CD4-positive, alpha-beta memory T cell (primary cell): ENCODE measurements at regions of chr12 and their contacts with region 1.

Region 1: DNA sequence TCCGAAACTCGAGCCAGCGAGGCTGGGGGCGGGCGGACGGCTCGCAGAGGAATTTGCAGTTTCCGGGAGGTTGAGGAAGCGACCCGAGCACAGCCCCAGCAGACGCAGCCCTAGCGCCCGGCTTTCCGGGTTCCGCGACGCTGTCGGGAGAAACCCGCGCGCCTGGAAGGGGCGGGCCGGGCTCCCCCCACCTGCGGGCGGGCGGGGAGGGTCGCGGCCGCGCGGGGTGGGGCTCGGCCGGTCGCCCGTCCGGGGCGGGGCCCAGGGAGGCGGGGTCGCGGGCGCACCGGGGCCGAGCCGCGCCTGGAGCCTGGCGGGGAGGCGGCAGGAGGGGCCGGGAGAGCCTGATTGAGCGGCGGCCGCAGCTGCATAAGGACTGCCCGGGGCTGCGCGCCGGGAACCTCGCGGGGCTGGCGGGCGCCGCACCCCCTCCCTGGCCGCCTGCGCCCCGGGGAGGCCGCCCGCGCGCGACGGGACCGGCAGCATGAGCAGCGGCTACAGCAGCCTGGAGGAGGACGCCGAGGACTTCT is at the start of gene RASSF3:
- DNase-seq: peak; percentile 74 to 79 (median 79)
- H3K4me3 ChIP-seq: peak within 1 kb of the TSS; percentile 91 to 95
- H3K4me3 Mint-ChIP-seq: peak within 1 kb of the TSS; percentile 96 to 99 (median 98)
- H3K27ac ChIP-seq: peak within 1 kb of the TSS; percentile 88
- H3K27ac Mint-ChIP-seq: peak within 1 kb of the TSS; percentile 95 to 98 (median 97)
- H3K4me1 ChIP-seq: peaks cover 41% of the 10 kb centered on the region
- H3K4me1 Mint-ChIP-seq: peaks cover 27 to 65% (median 40%) of the 10 kb centered on the region in 4 donors
- H3K27me3 ChIP-seq: no peaks in the 10 kb centered on the region
- H3K27me3 Mint-ChIP-seq: no peaks in the 10 kb centered on the region
- total RNA-seq, gene RASSF3: 159 TPM

Region 2: GRCh38 chr12:64403707-64404469 is 206.3 kb before region 1 on chr12 and contains the start of gene XPOT:
- CTCF ChIA-PET with region 1: no interaction called
- POLR2A ChIA-PET with region 1: interaction called, 3 read pairs
- intact Hi-C with region 1: loop called (anchors 5 kb)
- DNase-seq: peak; percentile 91 to 95 (median 94)
- H3K4me3 ChIP-seq: peak within 1 kb of the TSS; percentile 78 to 86
- H3K4me3 Mint-ChIP-seq: peak within 1 kb of the TSS; percentile 90 to 98 (median 96)
- H3K27ac ChIP-seq: peak within 1 kb of the TSS; percentile 91
- H3K27ac Mint-ChIP-seq: peak within 1 kb of the TSS; percentile 94 to 98 (median 97)
- H3K4me1 ChIP-seq: peaks cover 33% of the 10 kb centered on the region
- H3K4me1 Mint-ChIP-seq: peaks cover 21 to 49% (median 37%) of the 10 kb centered on the region in 4 donors
- H3K27me3 ChIP-seq: no peaks in the 10 kb centered on the region
- H3K27me3 Mint-ChIP-seq: no peaks in the 10 kb centered on the region
- total RNA-seq, gene XPOT: 88.8 TPM

Region 3: GRCh38 chr12:64551698-64552097 is 58.5 kb before region 1 on chr12:
- CTCF ChIA-PET with region 1: interaction called, 75 read pairs
- POLR2A ChIA-PET with region 1: interaction called, 20 read pairs
- intact Hi-C with region 1: loop called (anchors 1 kb)
- DNase-seq: no peak
- H3K4me3 ChIP-seq: no peak overlapping the region
- H3K4me3 Mint-ChIP-seq: no peak overlapping the region
- H3K27ac ChIP-seq: no peak overlapping the region
- H3K27ac Mint-ChIP-seq: no peak overlapping the region
- H3K4me1 ChIP-seq: peaks cover 8% of the 10 kb centered on the region
- H3K4me1 Mint-ChIP-seq: peaks cover 5 to 9% (median 6%) of the 10 kb centered on the region in 4 donors
- H3K27me3 ChIP-seq: no peaks in the 10 kb centered on the region
- H3K27me3 Mint-ChIP-seq: no peaks in the 10 kb centered on the region

Region 4: DNA sequence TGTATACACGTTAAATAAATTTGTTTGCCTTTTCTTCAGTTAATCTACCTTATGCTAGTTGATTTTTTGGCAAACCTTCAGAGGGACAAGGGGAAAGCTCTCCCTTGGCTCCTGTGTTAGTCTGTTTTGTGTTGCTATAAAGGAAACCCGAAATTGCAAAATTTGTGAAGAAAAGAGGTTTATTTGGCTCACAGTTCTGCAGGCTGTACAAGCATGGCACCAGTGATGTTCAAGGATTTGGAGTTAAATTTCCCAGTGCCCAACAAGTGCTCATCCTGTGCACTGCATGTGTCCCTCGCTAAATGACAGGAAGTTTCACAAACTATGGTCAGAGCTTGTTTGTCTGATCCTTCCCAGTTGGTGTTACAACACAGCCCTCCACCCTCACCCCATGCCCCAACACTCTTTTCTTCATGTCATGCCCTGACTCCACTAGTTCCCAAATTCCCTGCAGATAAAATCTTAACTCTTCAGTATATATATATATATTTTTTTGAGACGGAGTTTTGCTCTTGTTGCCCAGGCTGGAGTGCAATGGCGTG is 13.9 kb before region 1 on chr12:
- CTCF ChIA-PET with region 1: interaction called, 10 read pairs
- POLR2A ChIA-PET with region 1: interaction called, 46 read pairs
- intact Hi-C with region 1: loop called (anchors 1 kb)
- DNase-seq: no peak
- H3K4me3 ChIP-seq: no peak overlapping the region
- H3K4me3 Mint-ChIP-seq: peak overlapping the region in 1 of 8 donors; percentile 55
- H3K27ac ChIP-seq: no peak overlapping the region
- H3K27ac Mint-ChIP-seq: peak overlapping the region in 3 of 7 donors; percentile 5 to 66 (median 23)
- H3K4me1 ChIP-seq: peaks cover 43% of the 10 kb centered on the region
- H3K4me1 Mint-ChIP-seq: peaks cover 30 to 49% (median 38%) of the 10 kb centered on the region in 4 donors
- H3K27me3 ChIP-seq: no peaks in the 10 kb centered on the region
- H3K27me3 Mint-ChIP-seq: no peaks in the 10 kb centered on the region

Region 5: GRCh38 chr12:64660237-64661018 is 50.2 kb after region 1 on chr12:
- CTCF ChIA-PET with region 1: interaction called, 5 read pairs
- POLR2A ChIA-PET with region 1: interaction called, 187 read pairs
- intact Hi-C with region 1: no loop called
- DNase-seq: no peak
- H3K4me3 ChIP-seq: no peak overlapping the region
- H3K4me3 Mint-ChIP-seq: peak overlapping the region in 7 of 8 donors; percentile 29 to 76 (median 46)
- H3K27ac ChIP-seq: peak overlapping the region; percentile 43
- H3K27ac Mint-ChIP-seq: peak overlapping the region; percentile 70 to 94 (median 87)
- H3K4me1 ChIP-seq: peaks cover 99% of the 10 kb centered on the region
- H3K4me1 Mint-ChIP-seq: peaks cover 65 to 96% (median 83%) of the 10 kb centered on the region in 4 donors
- H3K27me3 ChIP-seq: no peaks in the 10 kb centered on the region
- H3K27me3 Mint-ChIP-seq: no peaks in the 10 kb centered on the region

Region 6: GRCh38 chr12:64679487-64679983 is 69.3 kb after region 1 on chr12:
- CTCF ChIA-PET with region 1: interaction called, 13 read pairs
- POLR2A ChIA-PET with region 1: interaction called, 334 read pairs
- intact Hi-C with region 1: loop called (anchors 1 kb)
- DNase-seq: peak; percentile 73 to 86 (median 80)
- H3K4me3 ChIP-seq: peak overlapping the region in 1 of 2 donors; percentile 36
- H3K4me3 Mint-ChIP-seq: peak overlapping the region; percentile 76 to 85 (median 79)
- H3K27ac ChIP-seq: peak overlapping the region; percentile 75
- H3K27ac Mint-ChIP-seq: peak overlapping the region; percentile 94 to 98 (median 97)
- H3K4me1 ChIP-seq: peaks cover 99% of the 10 kb centered on the region
- H3K4me1 Mint-ChIP-seq: peaks cover 67 to 100% (median 86%) of the 10 kb centered on the region in 4 donors
- H3K27me3 ChIP-seq: no peaks in the 10 kb centered on the region
- H3K27me3 Mint-ChIP-seq: no peaks in the 10 kb centered on the region

Region 7: GRCh38 chr12:64696080-64696741 is 86.0 kb after region 1 on chr12:
- CTCF ChIA-PET with region 1: interaction called, 87 read pairs
- POLR2A ChIA-PET with region 1: interaction called, 202 read pairs
- intact Hi-C with region 1: loop called (anchors 1 kb)
- DNase-seq: no peak
- H3K4me3 ChIP-seq: no peak overlapping the region
- H3K4me3 Mint-ChIP-seq: peak overlapping the region in 6 of 8 donors; percentile 18 to 52 (median 28)
- H3K27ac ChIP-seq: peak overlapping the region; percentile 20
- H3K27ac Mint-ChIP-seq: peak overlapping the region; percentile 65 to 92 (median 83)
- H3K4me1 ChIP-seq: peaks cover 84% of the 10 kb centered on the region
- H3K4me1 Mint-ChIP-seq: peaks cover 60 to 83% (median 73%) of the 10 kb centered on the region in 4 donors
- H3K27me3 ChIP-seq: no peaks in the 10 kb centered on the region
- H3K27me3 Mint-ChIP-seq: no peaks in the 10 kb centered on the region